Calu3 (cell line): ENCODE measurements at regions of chr2 and their contacts with region 1.

Region 1: DNA sequence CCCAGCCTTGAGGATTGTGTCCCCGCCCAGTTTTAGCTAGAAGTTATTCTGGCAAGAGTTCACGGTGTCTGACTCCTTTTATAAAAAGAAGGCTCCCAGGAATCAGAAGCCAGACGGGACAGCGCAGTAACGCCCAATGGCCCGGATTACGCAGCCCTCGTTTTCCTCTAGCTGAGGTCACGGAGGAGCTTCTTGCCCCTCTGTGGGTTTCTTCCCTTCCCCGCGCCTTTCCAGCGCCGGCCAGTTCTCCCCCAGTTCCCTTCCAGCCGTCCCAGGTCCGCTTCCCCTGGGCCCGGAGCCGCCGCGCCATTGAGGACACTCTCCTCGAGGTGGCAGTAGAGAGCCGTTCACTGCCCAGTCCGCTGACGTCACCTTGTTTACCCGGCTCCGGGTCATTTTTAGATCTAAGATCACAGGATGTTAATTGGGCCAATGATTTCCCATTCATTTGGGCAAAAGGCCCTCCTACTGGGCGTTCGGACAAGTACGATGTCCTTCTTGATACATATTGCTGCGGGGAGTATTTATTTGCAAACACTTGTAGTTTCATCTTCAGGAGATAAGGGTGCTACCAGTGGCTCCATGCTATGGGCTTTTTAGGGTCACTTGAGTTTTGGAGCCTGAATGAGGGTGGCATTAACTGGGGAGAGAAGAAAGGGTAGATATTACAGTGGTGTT is 81.5 kb upstream of the PPM1B start:
- DNase-seq: peak; percentile 90
- H3K4me3 Mint-ChIP-seq: peak overlapping the region; percentile 68
- H3K27ac Mint-ChIP-seq: peak overlapping the region; percentile 75
- H3K4me1 Mint-ChIP-seq: peaks cover 65% of the 10 kb centered on the region
- H3K27me3 Mint-ChIP-seq: no peaks in the 10 kb centered on the region
- CTCF ChIP-seq: peak; percentile 89

Region 2: GRCh38 chr2:44004735-44005602 is 82.2 kb before region 1 on chr2:
- CTCF ChIA-PET with region 1: no interaction called
- intact Hi-C with region 1: no loop called
- DNase-seq: no peak
- H3K4me3 Mint-ChIP-seq: no peak overlapping the region
- H3K27ac Mint-ChIP-seq: no peak overlapping the region
- H3K4me1 Mint-ChIP-seq: peaks cover 5% of the 10 kb centered on the region
- H3K27me3 Mint-ChIP-seq: peaks cover 14% of the 10 kb centered on the region
- CTCF ChIP-seq: no peak

Region 3: GRCh38 chr2:44044281-44044720 is 42.9 kb before region 1 on chr2:
- CTCF ChIA-PET with region 1: interaction called, 8 read pairs
- intact Hi-C with region 1: loop called (anchors 1 kb)
- DNase-seq: peak; percentile 90
- H3K4me3 Mint-ChIP-seq: no peak overlapping the region
- H3K27ac Mint-ChIP-seq: no peak overlapping the region
- H3K4me1 Mint-ChIP-seq: no peaks in the 10 kb centered on the region
- H3K27me3 Mint-ChIP-seq: no peaks in the 10 kb centered on the region
- CTCF ChIP-seq: peak; percentile 86

Region 4: GRCh38 chr2:44167940-44168680 is 80.9 kb after region 1 on chr2:
- CTCF ChIA-PET with region 1: interaction called, 8 read pairs
- intact Hi-C with region 1: loop called (anchors 1 kb)
- DNase-seq: peak; percentile 97
- H3K4me3 Mint-ChIP-seq: peak overlapping the region; percentile 86
- H3K27ac Mint-ChIP-seq: peak overlapping the region; percentile 89
- H3K4me1 Mint-ChIP-seq: peaks cover 8% of the 10 kb centered on the region
- H3K27me3 Mint-ChIP-seq: no peaks in the 10 kb centered on the region
- CTCF ChIP-seq: no peak

Region 5: GRCh38 chr2:44233450-44234128 is 146.4 kb after region 1 on chr2:
- CTCF ChIA-PET with region 1: no interaction called
- intact Hi-C with region 1: loop called (anchors 2 kb)
- DNase-seq: no peak
- H3K4me3 Mint-ChIP-seq: no peak overlapping the region
- H3K27ac Mint-ChIP-seq: peak overlapping the region; percentile 54
- H3K4me1 Mint-ChIP-seq: no peaks in the 10 kb centered on the region
- H3K27me3 Mint-ChIP-seq: no peaks in the 10 kb centered on the region
- CTCF ChIP-seq: no peak

Region 6: DNA sequence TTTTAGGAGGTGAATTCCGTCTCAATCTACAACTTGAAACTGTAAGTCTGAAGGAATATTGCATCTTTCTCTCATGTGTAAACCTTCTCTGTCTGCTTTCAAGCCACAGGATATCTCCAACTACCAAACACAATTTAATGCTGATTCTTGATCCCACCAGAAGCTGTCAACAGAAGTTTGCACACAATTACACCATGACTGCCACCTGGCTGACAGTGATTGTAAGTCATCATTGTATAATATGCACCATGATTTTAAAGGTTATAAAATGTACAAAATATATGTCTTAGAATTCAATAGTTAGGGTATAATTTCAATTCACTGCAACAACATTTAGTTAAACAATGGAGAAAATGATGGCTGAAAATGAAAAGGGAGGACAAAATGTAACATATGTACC is 255.7 kb after region 1 on chr2:
- CTCF ChIA-PET with region 1: no interaction called
- intact Hi-C with region 1: loop called (anchors 5 kb)
- DNase-seq: peak; percentile 24
- H3K4me3 Mint-ChIP-seq: no peak overlapping the region
- H3K27ac Mint-ChIP-seq: no peak overlapping the region
- H3K4me1 Mint-ChIP-seq: no peaks in the 10 kb centered on the region
- H3K27me3 Mint-ChIP-seq: no peaks in the 10 kb centered on the region
- CTCF ChIP-seq: no peak